ENCODE measurements at regions of chr1 and their contacts with region 1.

Region 1: DNA sequence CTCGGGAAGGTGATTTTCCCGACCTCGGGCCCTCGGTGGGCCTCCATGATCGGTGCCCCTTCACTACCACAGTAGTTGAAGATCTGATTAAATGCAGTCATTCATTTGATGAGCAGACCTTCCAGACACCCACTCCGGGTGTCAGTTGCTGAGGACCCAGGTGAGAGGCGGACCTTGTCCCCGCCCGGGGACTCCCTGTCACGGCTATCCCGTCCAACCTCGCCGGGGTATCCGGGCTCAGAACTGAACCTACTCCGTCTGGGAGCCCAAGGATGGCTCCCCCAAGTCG is 22.6 kb downstream of the RNU1-3 start:
- DNase-seq: no peak
- ATAC-seq: peak; percentile 63
- H3K4me3 ChIP-seq: peak overlapping the region; percentile 50
- H3K27ac ChIP-seq: peak overlapping the region; percentile 75
- H3K4me1 ChIP-seq: peaks cover 27 to 49% of the 10 kb centered on the region in 2 experiments
- H3K27me3 ChIP-seq: no peaks in the 10 kb centered on the region
- CTCF ChIP-seq: no peak
- EP300 ChIP-seq: no peak
- POLR2A ChIP-seq: no peak
- RAD21 ChIP-seq: no peak

Region 2: DNA sequence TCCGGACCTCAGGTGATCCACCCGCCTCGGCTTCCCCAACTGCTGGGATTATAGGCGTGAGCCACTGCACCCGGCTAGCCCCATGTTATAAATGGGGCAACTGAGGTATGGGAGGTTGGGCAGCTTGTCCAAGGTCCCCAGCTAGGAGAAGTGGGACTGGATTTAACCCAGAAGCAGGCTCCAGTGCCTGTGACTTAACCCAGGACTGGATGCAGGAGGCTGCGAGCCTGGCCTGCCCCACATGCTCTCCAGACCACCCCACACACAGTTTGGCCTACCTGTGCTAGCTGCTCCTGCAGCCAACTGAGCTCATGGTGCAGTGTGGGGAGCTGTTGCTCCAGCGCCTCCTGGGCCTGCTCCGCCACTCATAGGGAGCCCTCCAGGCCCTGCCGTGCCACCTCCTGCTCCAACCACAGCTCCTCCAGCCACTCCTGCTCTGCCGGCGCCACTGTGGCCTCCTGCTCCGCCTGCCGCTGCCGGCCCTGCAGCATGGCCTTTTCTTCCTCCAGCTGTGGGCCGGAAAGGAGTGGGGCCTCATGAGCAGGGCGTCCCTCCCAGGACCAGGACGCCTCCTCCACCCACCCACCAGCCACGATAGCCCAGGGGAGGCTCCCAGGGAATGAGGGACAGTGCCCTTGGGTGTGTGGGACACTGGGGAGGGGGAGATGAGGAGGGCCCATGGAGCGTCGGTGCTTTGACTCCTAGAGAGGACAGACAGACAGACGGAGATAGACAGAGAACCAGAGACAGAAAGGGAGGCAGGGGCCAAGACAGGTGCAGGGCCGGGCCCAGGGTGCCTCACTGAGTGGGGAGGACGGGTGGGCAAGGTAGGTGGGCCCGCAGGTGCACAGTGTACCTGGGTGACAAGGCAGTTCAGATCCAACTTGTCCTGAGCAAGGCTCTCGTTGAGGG is 18.4 kb before region 1 on chr1:
- CTCF ChIA-PET with region 1: interaction called, 5 read pairs
- POLR2A ChIA-PET with region 1: interaction called, 37 read pairs
- in situ Hi-C with region 1: no loop called
- intact Hi-C with region 1: loop called (anchors 1 kb)
- DNase-seq: peak in 3 of 4 experiments; percentile 46 to 49 (median 47)
- ATAC-seq: no peak
- H3K4me3 ChIP-seq: no peak overlapping the region
- H3K27ac ChIP-seq: no peak overlapping the region
- H3K4me1 ChIP-seq: peaks cover 4 to 36% of the 10 kb centered on the region in 2 experiments; a peak in 3 of 5 replicates
- H3K27me3 ChIP-seq: no peaks in the 10 kb centered on the region
- CTCF ChIP-seq: 0 out of 6 replicates have a peak, but pooled peaks of 1 of the 3 experiments have one; percentile 2
- EP300 ChIP-seq: no peak
- POLR2A ChIP-seq: no peak; the same call in 1 of the 2 replicates
- RAD21 ChIP-seq: no peak

Region 3: DNA sequence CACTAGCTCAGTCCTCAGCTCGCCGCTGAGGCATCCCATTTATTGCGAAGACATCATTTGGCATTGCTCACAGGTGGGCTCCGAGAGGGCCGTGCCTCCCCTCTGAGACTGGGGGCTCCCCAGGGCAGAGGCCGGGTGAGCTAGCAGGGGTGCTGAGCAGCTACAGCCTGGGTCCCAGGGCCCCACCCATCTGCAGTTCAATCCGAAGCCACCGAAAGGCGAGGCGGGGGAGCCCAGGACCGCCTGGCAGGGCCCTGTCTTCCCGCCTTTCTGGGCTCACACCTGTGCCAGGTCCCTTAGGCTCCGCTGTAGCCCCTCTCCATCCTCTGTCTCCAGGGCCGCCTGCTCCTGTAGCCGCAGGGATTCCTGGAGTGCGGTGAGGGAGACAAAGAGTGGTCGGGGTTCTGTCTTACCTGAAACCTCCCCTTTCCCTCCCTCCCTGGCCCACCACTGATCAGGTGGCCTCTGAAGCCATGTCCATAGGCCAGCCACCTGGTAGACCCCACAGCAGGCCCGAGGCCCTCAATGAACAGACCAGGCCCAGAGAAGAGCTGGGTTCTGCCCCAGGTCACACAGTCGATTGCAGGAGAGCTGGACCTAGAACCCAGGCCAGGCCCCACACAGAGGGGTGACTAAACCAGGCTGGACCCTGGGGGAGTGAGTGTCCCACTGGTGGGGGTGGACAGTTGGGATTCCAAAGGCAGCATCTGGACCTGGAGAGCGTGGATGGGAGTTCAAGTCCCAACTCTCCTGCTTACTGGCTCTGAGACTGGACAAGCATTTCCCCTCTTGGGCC is 12.7 kb before region 1 on chr1:
- CTCF ChIA-PET with region 1: no interaction called
- POLR2A ChIA-PET with region 1: interaction called, 37 read pairs
- in situ Hi-C with region 1: no loop called
- intact Hi-C with region 1: no loop called
- DNase-seq: peak in 3 of 4 experiments; percentile 34 to 50 (median 49)
- ATAC-seq: no peak; the same call in 2 of the 3 replicates
- H3K4me3 ChIP-seq: no peak overlapping the region
- H3K27ac ChIP-seq: no peak overlapping the region
- H3K4me1 ChIP-seq: peaks cover 0 to 22% of the 10 kb centered on the region in 2 experiments; a peak in 1 of 5 replicates
- H3K27me3 ChIP-seq: no peaks in the 10 kb centered on the region
- CTCF ChIP-seq: no peak
- EP300 ChIP-seq: no peak
- POLR2A ChIP-seq: peak; percentile 41
- RAD21 ChIP-seq: no peak